Naive thymus-derived CD4-positive, alpha-beta T cell (primary cell): ENCODE measurements at regions of chr3 and their contacts with region 1.

Region 1: GRCh38 chr3:141311496-141312353 is 56.6 kb upstream of the ZBTB38 start:
- DNase-seq: peak; percentile 88 to 98 (median 97)
- ATAC-seq: peak; percentile 97
- H3K4me3 ChIP-seq: peak overlapping the region; percentile 80
- H3K4me3 Mint-ChIP-seq: peak overlapping the region; percentile 89 to 99 (median 97)
- H3K27ac ChIP-seq: peak overlapping the region; percentile 77
- H3K27ac Mint-ChIP-seq: peak overlapping the region; percentile 91 to 99 (median 97)
- H3K4me1 ChIP-seq: peaks cover 31 to 43% of the 10 kb centered on the region in 2 donors
- H3K4me1 Mint-ChIP-seq: peaks cover 38 to 71% (median 61%) of the 10 kb centered on the region in 7 donors
- H3K27me3 ChIP-seq: no peaks in the 10 kb centered on the region
- H3K27me3 Mint-ChIP-seq: no peaks in the 10 kb centered on the region

Region 2: DNA sequence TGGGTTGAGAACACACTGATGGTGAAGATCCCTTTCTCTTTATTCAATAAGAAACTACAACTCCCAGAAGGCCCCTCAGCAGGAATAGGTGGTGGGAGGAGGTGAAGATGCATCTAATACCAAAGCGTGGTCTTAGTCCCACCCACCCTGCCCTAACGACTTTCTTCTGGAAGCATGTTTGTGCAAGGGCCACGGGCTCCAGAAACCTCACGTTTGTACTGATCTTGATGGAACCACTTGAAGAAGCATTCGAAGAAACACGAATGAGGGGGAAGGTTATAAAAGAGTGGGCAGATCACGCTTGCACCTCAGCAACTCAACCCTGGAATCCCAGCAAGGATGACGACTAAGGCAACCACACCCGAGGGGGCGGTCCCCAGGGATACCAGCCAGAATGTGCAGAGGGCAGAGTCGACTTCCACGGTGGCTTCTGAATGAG is 380.7 kb before region 1 on chr3:
- CTCF ChIA-PET with region 1: no interaction called
- POLR2A ChIA-PET with region 1: no interaction called
- intact Hi-C with region 1: no loop called
- DNase-seq: no peak
- ATAC-seq: no peak
- H3K4me3 ChIP-seq: no peak overlapping the region
- H3K4me3 Mint-ChIP-seq: no peak overlapping the region
- H3K27ac ChIP-seq: no peak overlapping the region
- H3K27ac Mint-ChIP-seq: peak overlapping the region in 1 of 9 donors; percentile 74
- H3K4me1 ChIP-seq: no peaks in the 10 kb centered on the region
- H3K4me1 Mint-ChIP-seq: no peaks in the 10 kb centered on the region
- H3K27me3 ChIP-seq: no peaks in the 10 kb centered on the region
- H3K27me3 Mint-ChIP-seq: peaks cover 35 to 46% (median 41%) of the 10 kb centered on the region in 5 donors

Region 3: GRCh38 chr3:141266797-141267555 is 44.7 kb before region 1 on chr3:
- CTCF ChIA-PET with region 1: interaction called, 6 read pairs
- POLR2A ChIA-PET with region 1: interaction called, 54 read pairs
- intact Hi-C with region 1: no loop called
- DNase-seq: peak in 8 of 9 donors; percentile 20 to 82 (median 72)
- ATAC-seq: peak; percentile 85
- H3K4me3 ChIP-seq: peak overlapping the region; percentile 73
- H3K4me3 Mint-ChIP-seq: peak overlapping the region; percentile 84 to 92 (median 88)
- H3K27ac ChIP-seq: peak overlapping the region; percentile 77
- H3K27ac Mint-ChIP-seq: peak overlapping the region; percentile 91 to 99 (median 96)
- H3K4me1 ChIP-seq: peaks cover 0 to 35% of the 10 kb centered on the region in 2 donors
- H3K4me1 Mint-ChIP-seq: peaks cover 32 to 87% (median 39%) of the 10 kb centered on the region in 7 donors
- H3K27me3 ChIP-seq: no peaks in the 10 kb centered on the region
- H3K27me3 Mint-ChIP-seq: no peaks in the 10 kb centered on the region

Region 4: DNA sequence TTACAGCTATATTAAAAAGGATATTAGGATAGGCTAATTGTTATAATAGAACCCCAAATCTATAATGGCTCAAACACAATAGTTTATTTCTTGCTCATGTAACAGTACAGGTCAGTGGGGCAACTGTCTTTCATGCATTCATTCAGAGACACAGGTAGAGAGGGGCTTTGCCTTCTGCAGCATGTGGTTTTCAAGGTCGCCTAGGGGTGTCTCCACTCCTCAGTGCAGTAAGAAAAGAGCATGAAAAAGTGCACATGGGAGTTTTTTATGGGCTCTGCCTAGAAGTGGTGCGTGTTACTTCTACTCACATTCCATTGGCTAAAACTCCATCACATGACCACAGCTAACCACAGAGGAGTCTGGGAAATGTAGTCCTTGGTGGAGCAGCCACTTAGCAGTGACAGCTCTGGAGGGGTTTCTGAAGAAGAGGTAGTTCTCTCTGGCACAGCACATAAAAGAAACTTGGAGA is 58.4 kb after region 1 on chr3:
- CTCF ChIA-PET with region 1: interaction called, 3 read pairs
- POLR2A ChIA-PET with region 1: interaction called, 3 read pairs
- intact Hi-C with region 1: loop called (anchors 1 kb)
- DNase-seq: peak; percentile 17 to 90 (median 81)
- ATAC-seq: peak; percentile 99
- H3K4me3 ChIP-seq: no peak overlapping the region
- H3K4me3 Mint-ChIP-seq: no peak overlapping the region
- H3K27ac ChIP-seq: no peak overlapping the region
- H3K27ac Mint-ChIP-seq: peak overlapping the region in 6 of 9 donors; percentile 13 to 76 (median 46)
- H3K4me1 ChIP-seq: no peaks in the 10 kb centered on the region
- H3K4me1 Mint-ChIP-seq: peaks cover 4 to 17% (median 7%) of the 10 kb centered on the region in 7 donors
- H3K27me3 ChIP-seq: no peaks in the 10 kb centered on the region
- H3K27me3 Mint-ChIP-seq: peaks cover 0 to 3% (median 0%) of the 10 kb centered on the region in 5 donors

Region 5: GRCh38 chr3:141441381-141442364 is 129.9 kb after region 1 on chr3:
- CTCF ChIA-PET with region 1: interaction called, 31 read pairs
- POLR2A ChIA-PET with region 1: interaction called, 5 read pairs
- intact Hi-C with region 1: loop called (anchors 1 kb)
- DNase-seq: peak; percentile 29 to 68 (median 64)
- ATAC-seq: peak; percentile 97
- H3K4me3 ChIP-seq: no peak overlapping the region
- H3K4me3 Mint-ChIP-seq: no peak overlapping the region
- H3K27ac ChIP-seq: no peak overlapping the region
- H3K27ac Mint-ChIP-seq: peak overlapping the region in 6 of 9 donors; percentile 14 to 79 (median 42)
- H3K4me1 ChIP-seq: peaks cover 0 to 13% of the 10 kb centered on the region in 2 donors
- H3K4me1 Mint-ChIP-seq: peaks cover 9 to 24% (median 24%) of the 10 kb centered on the region in 7 donors
- H3K27me3 ChIP-seq: no peaks in the 10 kb centered on the region
- H3K27me3 Mint-ChIP-seq: no peaks in the 10 kb centered on the region

Region 6: GRCh38 chr3:141498598-141499223 is 187.0 kb after region 1 on chr3:
- CTCF ChIA-PET with region 1: no interaction called
- POLR2A ChIA-PET with region 1: no interaction called
- intact Hi-C with region 1: loop called in 1 of 2 experiments (anchors 1 kb)
- DNase-seq: peak; percentile 34 to 96 (median 94)
- ATAC-seq: peak; percentile 91
- H3K4me3 ChIP-seq: peak overlapping the region; percentile 52
- H3K4me3 Mint-ChIP-seq: peak overlapping the region in 9 of 10 donors; percentile 68 to 89 (median 82)
- H3K27ac ChIP-seq: peak overlapping the region; percentile 73
- H3K27ac Mint-ChIP-seq: peak overlapping the region in 5 of 9 donors; percentile 93 to 99 (median 96)
- H3K4me1 ChIP-seq: peaks cover 66 to 69% of the 10 kb centered on the region in 2 donors
- H3K4me1 Mint-ChIP-seq: peaks cover 32 to 76% (median 50%) of the 10 kb centered on the region in 7 donors
- H3K27me3 ChIP-seq: no peaks in the 10 kb centered on the region
- H3K27me3 Mint-ChIP-seq: no peaks in the 10 kb centered on the region

Region 7: DNA sequence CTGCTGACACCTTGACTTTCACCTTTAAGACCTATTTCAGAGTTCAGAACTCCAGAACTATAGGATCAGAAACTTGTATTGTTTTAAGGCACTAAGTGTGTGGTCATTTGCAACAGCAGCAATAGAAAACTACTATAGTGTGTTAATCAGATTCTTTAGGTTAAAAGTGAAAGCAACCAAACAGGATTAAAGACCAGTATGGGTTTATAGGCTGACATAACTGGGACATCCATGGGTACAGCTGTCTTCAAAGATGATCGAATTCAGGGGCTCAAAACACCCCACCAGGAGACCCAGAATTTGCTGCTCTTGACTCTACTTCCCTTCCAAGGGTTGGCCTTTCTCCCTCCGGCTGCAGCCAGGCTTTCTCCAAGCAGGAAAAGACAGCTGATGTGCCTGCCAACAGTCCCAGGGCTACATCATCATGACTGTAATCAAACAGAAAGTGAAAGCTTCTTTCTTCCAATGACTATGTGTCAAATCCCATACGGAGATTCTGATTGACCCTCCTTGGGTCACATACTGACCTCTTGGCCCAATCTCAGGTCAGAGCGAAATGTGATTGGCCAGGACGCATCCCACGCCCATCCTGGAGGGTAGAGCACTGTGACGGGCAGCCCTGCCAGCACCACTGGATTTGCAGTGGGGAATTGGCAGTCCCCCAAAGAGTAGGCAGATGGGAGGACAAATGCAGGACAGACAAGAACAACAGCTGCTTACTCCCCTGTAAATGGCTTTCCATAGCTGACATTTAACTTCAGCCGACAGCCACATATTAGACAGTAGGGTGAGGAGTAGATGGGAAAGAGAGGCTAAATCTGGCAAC is 375.0 kb after region 1 on chr3:
- CTCF ChIA-PET with region 1: no interaction called
- POLR2A ChIA-PET with region 1: no interaction called
- intact Hi-C with region 1: no loop called
- DNase-seq: peak in 4 of 9 donors; percentile 9 to 24 (median 16)
- ATAC-seq: peak; percentile 71
- H3K4me3 ChIP-seq: peak overlapping the region; percentile 49
- H3K4me3 Mint-ChIP-seq: peak overlapping the region; percentile 71 to 93 (median 88)
- H3K27ac ChIP-seq: no peak overlapping the region
- H3K27ac Mint-ChIP-seq: peak overlapping the region; percentile 82 to 95 (median 87)
- H3K4me1 ChIP-seq: peaks cover 0 to 3% of the 10 kb centered on the region in 2 donors
- H3K4me1 Mint-ChIP-seq: peaks cover 6 to 29% (median 22%) of the 10 kb centered on the region in 7 donors
- H3K27me3 ChIP-seq: no peaks in the 10 kb centered on the region
- H3K27me3 Mint-ChIP-seq: no peaks in the 10 kb centered on the region

Region 8: GRCh38 chr3:142148792-142149672 is 837.3 kb after region 1 on chr3 and contains the start of gene TFDP2:
- CTCF ChIA-PET with region 1: no interaction called
- POLR2A ChIA-PET with region 1: no interaction called
- intact Hi-C with region 1: loop called in 1 of 2 experiments (anchors 5 kb)
- DNase-seq: peak; percentile 77 to 88 (median 86)
- ATAC-seq: peak; percentile 99
- H3K4me3 ChIP-seq: peak within 1 kb of the TSS; percentile 81
- H3K4me3 Mint-ChIP-seq: peak within 1 kb of the TSS; percentile 85 to 96 (median 92)
- H3K27ac ChIP-seq: peak within 1 kb of the TSS; percentile 78
- H3K27ac Mint-ChIP-seq: peak within 1 kb of the TSS; percentile 57 to 95 (median 87)
- H3K4me1 ChIP-seq: peaks cover 0 to 13% of the 10 kb centered on the region in 2 donors
- H3K4me1 Mint-ChIP-seq: peaks cover 24 to 41% (median 32%) of the 10 kb centered on the region in 7 donors
- H3K27me3 ChIP-seq: no peaks in the 10 kb centered on the region
- H3K27me3 Mint-ChIP-seq: peaks cover 0 to 16% (median 0%) of the 10 kb centered on the region in 5 donors
- total RNA-seq, gene TFDP2: 23.7 to 44.7 (median 41.0) TPM